WTC11 (cell line): ENCODE measurements at regions of chr1 and their contacts with region 1.

Region 1: DNA sequence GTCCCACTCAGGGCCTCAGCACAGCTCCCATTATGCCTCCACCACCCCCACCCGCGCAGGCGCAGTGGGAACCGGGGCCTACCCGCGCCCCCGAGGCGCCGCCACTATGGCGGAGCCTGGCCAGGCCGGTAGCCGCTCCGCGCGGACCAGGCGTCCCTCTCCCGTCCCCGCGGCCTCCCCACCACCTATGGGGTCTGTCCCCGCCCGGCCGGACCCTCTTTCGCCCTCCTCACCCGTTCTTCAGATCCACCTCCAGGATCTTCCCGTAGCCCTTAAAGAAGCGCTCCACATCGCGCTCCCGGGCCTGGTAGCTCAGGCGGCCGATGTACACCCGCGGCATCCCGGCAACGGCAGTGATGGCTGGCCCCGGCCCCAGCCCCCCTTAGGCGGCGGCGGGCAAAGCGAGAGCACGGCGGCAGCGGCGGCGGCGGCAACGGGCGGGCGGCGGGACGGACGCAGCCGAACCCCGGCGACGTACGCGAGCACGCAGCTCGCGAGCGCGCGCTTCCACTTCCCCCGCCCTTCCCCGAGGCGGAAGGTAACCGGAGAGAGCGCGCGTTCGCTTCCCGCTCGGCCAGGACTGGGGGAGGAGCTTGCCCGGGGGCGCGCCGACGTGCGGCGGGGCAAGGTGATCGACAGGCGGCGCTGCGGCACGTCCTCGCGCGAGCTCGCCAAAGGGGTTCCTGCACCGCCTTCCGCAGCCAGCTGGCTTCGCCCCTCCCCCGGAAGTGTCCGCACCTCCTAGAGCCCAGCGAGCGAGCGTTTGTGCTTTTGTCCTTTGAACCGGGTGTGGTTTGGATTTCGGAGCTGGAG is at the start of gene SRSF4:
- DNase-seq: peak; percentile 99
- ATAC-seq: peak; percentile 92
- H3K4me3 Mint-ChIP-seq: peak within 1 kb of the TSS; percentile 97
- H3K27ac Mint-ChIP-seq: peak within 1 kb of the TSS; percentile 99
- H3K4me1 Mint-ChIP-seq: peaks cover 64% of the 10 kb centered on the region
- H3K27me3 Mint-ChIP-seq: no peaks in the 10 kb centered on the region
- CTCF ChIP-seq: peak; percentile 49; the same call in 1 of the 2 replicates
- total RNA-seq, gene SRSF4: 93.8 to 99.9 TPM (median 94.7 TPM) in 3 replicates

Region 2: GRCh38 chr1:29124366-29125236 is 57.0 kb before region 1 on chr1:
- CTCF ChIA-PET with region 1: interaction called, 28 read pairs
- POLR2A ChIA-PET with region 1: interaction called, 18 read pairs
- DNase-seq: peak; percentile 93
- ATAC-seq: peak; percentile 40
- H3K4me3 Mint-ChIP-seq: peak overlapping the region; percentile 65
- H3K27ac Mint-ChIP-seq: no peak overlapping the region; the same call in 1 of the 2 replicates
- H3K4me1 Mint-ChIP-seq: peaks cover 19% of the 10 kb centered on the region
- H3K27me3 Mint-ChIP-seq: peaks cover 23% of the 10 kb centered on the region
- CTCF ChIP-seq: 0 out of 2 replicates have a peak, but pooled peaks have one; percentile 36

Region 3: GRCh38 chr1:29162476-29163138 is 19.0 kb before region 1 on chr1:
- CTCF ChIA-PET with region 1: interaction called, 15 read pairs
- POLR2A ChIA-PET with region 1: interaction called, 5 read pairs
- DNase-seq: no peak
- ATAC-seq: no peak
- H3K4me3 Mint-ChIP-seq: no peak overlapping the region
- H3K27ac Mint-ChIP-seq: peak overlapping the region; percentile 34
- H3K4me1 Mint-ChIP-seq: peaks cover 71% of the 10 kb centered on the region
- H3K27me3 Mint-ChIP-seq: no peaks in the 10 kb centered on the region
- CTCF ChIP-seq: no peak

Region 4: DNA sequence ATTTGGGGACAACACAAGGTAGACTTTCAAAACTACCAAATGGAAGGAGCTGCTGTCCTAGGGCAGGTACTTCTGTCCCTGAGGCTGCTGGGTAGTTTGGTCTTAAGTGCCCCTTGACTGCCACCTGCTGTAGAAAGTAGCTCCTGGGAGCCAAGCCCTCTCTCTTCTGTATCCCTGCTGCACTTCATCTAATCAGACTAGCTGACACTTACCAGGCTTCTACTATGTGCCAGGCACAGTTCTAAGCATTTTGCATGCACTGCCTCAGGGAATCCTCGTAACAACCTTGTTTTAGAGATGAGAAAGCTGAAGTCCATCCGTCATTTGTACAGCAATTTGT is 15.9 kb after region 1 on chr1:
- CTCF ChIA-PET with region 1: interaction called, 49 read pairs
- POLR2A ChIA-PET with region 1: interaction called, 10 read pairs
- DNase-seq: peak; percentile 27
- ATAC-seq: peak; percentile 96
- H3K4me3 Mint-ChIP-seq: no peak overlapping the region
- H3K27ac Mint-ChIP-seq: no peak overlapping the region
- H3K4me1 Mint-ChIP-seq: peaks cover 6% of the 10 kb centered on the region
- H3K27me3 Mint-ChIP-seq: no peaks in the 10 kb centered on the region
- CTCF ChIP-seq: no peak

Region 5: GRCh38 chr1:29202584-29203340 is 21.1 kb after region 1 on chr1:
- CTCF ChIA-PET with region 1: interaction called, 49 read pairs
- POLR2A ChIA-PET with region 1: interaction called, 10 read pairs
- DNase-seq: peak; percentile 99
- ATAC-seq: peak; percentile 96
- H3K4me3 Mint-ChIP-seq: no peak overlapping the region
- H3K27ac Mint-ChIP-seq: peak overlapping the region; percentile 68; the same call in 1 of the 2 replicates
- H3K4me1 Mint-ChIP-seq: peaks cover 8% of the 10 kb centered on the region
- H3K27me3 Mint-ChIP-seq: no peaks in the 10 kb centered on the region
- CTCF ChIP-seq: peak; percentile 95

Region 6: GRCh38 chr1:29453502-29454240 is 272.1 kb after region 1 on chr1:
- CTCF ChIA-PET with region 1: no interaction called
- POLR2A ChIA-PET with region 1: no interaction called
- DNase-seq: peak; percentile 38
- ATAC-seq: peak; percentile 90
- H3K4me3 Mint-ChIP-seq: peak overlapping the region; percentile 37
- H3K27ac Mint-ChIP-seq: peak overlapping the region; percentile 88
- H3K4me1 Mint-ChIP-seq: peaks cover 21% of the 10 kb centered on the region
- H3K27me3 Mint-ChIP-seq: no peaks in the 10 kb centered on the region; the same call in 1 of the 2 replicates
- CTCF ChIP-seq: peak; percentile 27; the same call in 1 of the 2 replicates